Activated CD4-positive, alpha-beta memory T cell treated with anti-CD3 and anti-CD28 coated beads for 36 hours (primary cell): ENCODE measurements at regions of chr10 and their contacts with region 1.

Region 1: DNA sequence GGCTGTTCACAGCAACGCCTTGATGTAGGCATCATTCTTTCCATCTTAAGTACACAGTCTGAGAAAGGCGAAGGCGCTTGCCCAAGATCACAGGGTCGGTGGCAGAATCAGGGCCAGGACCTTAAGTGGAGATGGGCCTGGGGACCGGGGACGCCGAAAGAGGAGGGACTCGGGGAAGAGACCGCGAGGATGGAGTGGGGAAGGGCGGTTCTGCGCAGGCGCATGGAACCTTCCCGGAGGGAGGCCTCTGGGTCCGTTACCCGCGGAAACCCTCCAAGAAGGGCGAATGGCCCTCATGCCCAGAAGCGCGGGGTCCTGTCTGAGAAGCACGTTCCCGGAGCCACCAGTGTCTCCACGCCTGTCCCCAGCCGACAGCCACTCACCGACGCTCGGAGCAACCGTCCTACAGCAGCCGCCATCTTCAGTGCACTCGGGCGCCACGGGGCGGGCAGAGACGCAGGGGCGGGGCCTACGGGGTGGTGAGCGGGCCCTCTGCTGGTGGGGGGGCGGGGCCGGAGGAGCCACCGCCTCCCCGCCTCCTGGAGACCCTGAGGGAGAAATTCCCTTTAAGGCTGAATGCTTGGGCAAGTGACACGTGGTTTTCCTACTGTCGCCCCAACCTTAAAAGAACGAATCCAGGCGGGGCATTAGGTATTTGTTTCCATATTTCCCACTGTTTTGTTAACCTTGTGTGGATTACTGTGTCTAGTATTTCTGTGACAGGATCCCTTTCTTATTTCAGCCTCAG is at the start of gene PRDX3:
- DNase-seq: peak; percentile 96
- H3K4me3 Mint-ChIP-seq: peak within 1 kb of the TSS; percentile 88
- H3K27ac Mint-ChIP-seq: peak within 1 kb of the TSS; percentile 94
- H3K4me1 Mint-ChIP-seq: peaks cover 35% of the 10 kb centered on the region
- H3K27me3 Mint-ChIP-seq: no peaks in the 10 kb centered on the region
- total RNA-seq, gene PRDX3: 173 to 182 TPM

Region 2: DNA sequence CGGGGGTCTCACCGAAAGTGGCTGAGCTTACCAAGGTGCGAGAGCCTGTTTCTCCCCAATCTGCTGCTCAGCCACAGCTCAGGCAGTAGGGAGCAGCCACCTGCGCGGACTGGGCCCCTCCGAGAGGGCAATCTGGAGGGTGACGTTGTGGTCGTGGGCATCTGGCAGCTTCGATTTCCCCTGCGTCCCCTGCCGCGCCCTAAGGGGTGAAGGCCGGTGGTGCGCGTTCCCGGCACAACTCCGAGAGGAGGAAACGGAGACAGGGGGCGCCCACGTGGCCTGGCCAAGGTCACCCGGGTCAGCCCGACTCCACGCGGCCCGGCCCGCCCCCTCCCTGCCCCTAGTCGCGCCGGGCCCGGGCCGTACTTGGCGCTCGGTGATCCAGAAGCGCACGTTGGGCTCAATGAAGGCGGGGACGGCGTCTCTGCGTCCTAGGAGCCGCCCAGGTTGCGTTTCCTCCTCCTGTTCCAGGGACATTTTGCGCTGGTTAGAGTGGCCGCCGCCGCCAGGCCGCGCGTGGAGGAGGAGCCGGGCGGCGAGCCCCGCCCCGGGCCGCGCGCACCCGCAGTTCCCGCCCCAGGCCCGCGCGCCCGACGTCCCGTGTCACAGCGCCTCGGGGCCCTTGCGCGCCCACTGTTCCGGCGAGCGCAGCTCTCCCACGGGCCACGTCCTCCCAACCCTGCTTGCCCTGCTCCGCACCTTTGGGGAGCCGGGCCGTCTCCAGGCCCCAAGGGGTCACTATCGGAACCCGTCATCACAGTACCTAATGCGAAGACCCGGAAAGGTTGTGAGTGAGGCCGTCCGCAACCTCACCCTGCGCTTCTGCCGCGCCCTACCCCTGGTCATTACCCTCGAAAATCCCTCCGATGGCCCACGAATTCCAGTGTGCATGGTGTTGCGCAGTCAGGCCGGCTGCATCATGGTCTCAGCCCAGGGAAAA is 13.1 kb before region 1 on chr10 and contains the start of gene SFXN4:
- CTCF ChIA-PET with region 1: interaction called, 5 read pairs
- POLR2A ChIA-PET with region 1: interaction called, 5 read pairs
- intact Hi-C with region 1: loop called (anchors 1 kb)
- DNase-seq: peak; percentile 83
- H3K4me3 Mint-ChIP-seq: peak within 1 kb of the TSS; percentile 84
- H3K27ac Mint-ChIP-seq: peak within 1 kb of the TSS; percentile 87
- H3K4me1 Mint-ChIP-seq: peaks cover 37% of the 10 kb centered on the region
- H3K27me3 Mint-ChIP-seq: no peaks in the 10 kb centered on the region
- total RNA-seq, gene SFXN4: 38.3 to 38.7 TPM